Sigmoid colon (tissue), 7 donors: ENCODE measurements at regions of chr1 and their contacts with region 1.

Region 1: GRCh38 chr1:235093696-235094592 is 34.7 kb downstream of the TOMM20 start:
- DNase-seq: peak; percentile 85
- H3K4me3 ChIP-seq: peak overlapping the region in 3 of 4 donors; percentile 14 to 23 (median 17)
- H3K27ac ChIP-seq: peak overlapping the region in 1 of 4 donors; percentile 26
- H3K4me1 ChIP-seq: peaks cover 0 to 22% (median 19%) of the 10 kb centered on the region in 4 donors
- H3K27me3 ChIP-seq: no peaks in the 10 kb centered on the region
- CTCF ChIP-seq: peak; percentile 83 to 88 (median 86)
- EP300 ChIP-seq: no peak
- POLR2A ChIP-seq: no peak

Region 2: GRCh38 chr1:234499119-234499942 is 594.6 kb before region 1 on chr1:
- intact Hi-C with region 1: loop called (anchors 2 kb)
- DNase-seq: peak; percentile 96
- H3K4me3 ChIP-seq: peak overlapping the region in 3 of 4 donors; percentile 20 to 34 (median 21)
- H3K27ac ChIP-seq: peak overlapping the region; percentile 80 to 89 (median 82)
- H3K4me1 ChIP-seq: peaks cover 0 to 38% (median 29%) of the 10 kb centered on the region in 4 donors
- H3K27me3 ChIP-seq: no peaks in the 10 kb centered on the region
- CTCF ChIP-seq: peak; percentile 94 to 97 (median 95)
- EP300 ChIP-seq: peak in 2 of 4 donors; percentile 56 to 57
- POLR2A ChIP-seq: peak in 1 of 2 donors; percentile 17